ENCODE measurements at regions of chr6 and their contacts with region 1.

Region 1: GRCh38 chr6:168949981-168950857 is 303.4 kb downstream of the THBS2 start:
- DNase-seq: no peak
- H3K4me3 ChIP-seq: no peak overlapping the region
- CTCF ChIP-seq: no peak

Region 2: GRCh38 chr6:168765752-168766151 is 184.5 kb before region 1 on chr6:
- CTCF ChIA-PET with region 1: no interaction called
- POLR2A ChIA-PET with region 1: no interaction called
- DNase-seq: no peak
- H3K4me3 ChIP-seq: no peak overlapping the region
- CTCF ChIP-seq: no peak

Region 3: GRCh38 chr6:169520104-169520503 is 569.9 kb after region 1 on chr6:
- CTCF ChIA-PET with region 1: interaction called, 11 read pairs
- POLR2A ChIA-PET with region 1: no interaction called
- DNase-seq: no peak
- H3K4me3 ChIP-seq: no peak overlapping the region
- CTCF ChIP-seq: peak; percentile 23

Region 4: DNA sequence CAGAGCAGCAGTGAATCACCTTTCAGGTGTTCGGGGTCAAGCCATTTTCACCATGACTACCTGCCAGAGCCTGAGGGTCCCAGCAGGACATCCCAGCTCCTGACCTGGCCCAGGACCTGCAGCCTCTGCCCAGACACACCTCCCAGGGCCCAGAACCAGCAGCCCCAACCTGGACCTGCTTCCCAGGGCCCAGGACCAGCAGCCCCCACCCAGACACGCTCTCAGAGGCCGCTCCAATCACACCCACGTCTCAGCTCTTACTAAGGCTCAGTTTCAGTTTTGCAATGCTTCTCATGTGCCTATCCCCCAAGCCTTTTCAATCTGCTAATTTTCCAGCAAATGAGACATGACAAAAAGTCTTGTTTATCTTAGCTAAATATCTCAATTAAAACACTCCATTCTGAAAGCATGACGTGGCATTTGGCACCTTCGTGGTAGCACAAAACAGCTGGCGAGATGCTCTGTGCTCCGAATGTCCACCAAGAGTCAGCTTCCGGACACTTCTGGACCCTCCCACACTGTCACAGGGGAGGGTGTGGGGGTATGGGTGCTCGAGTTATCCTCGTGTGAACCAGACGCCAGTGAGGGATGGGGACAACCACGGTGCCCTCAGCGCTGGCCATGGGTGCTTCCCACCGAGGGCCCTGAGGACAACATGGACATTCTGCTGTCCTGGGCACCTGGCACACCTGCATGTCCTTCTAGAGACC is 1087.5 kb after region 1 on chr6:
- CTCF ChIA-PET with region 1: no interaction called
- POLR2A ChIA-PET with region 1: no interaction called
- DNase-seq: no peak
- H3K4me3 ChIP-seq: no peak overlapping the region
- CTCF ChIP-seq: no peak

Measured in AG04449 (cell line).